Activated T-helper 1 cell treated with anti-CD3 and anti-CD28 coated beads, Interleukin-12 subunit alpha, Interleukin-12 subunit beta, Interleukin-2, Interleukin-4 antibody, amounts not matched to agents 30 ng/mL and 10 ng/mL and 1 ng/mL, durations not matched to agents 14 hours and 24 hours and 36 hours (primary cell): ENCODE measurements at regions of chr16 and their contacts with region 1.

Region 1: DNA sequence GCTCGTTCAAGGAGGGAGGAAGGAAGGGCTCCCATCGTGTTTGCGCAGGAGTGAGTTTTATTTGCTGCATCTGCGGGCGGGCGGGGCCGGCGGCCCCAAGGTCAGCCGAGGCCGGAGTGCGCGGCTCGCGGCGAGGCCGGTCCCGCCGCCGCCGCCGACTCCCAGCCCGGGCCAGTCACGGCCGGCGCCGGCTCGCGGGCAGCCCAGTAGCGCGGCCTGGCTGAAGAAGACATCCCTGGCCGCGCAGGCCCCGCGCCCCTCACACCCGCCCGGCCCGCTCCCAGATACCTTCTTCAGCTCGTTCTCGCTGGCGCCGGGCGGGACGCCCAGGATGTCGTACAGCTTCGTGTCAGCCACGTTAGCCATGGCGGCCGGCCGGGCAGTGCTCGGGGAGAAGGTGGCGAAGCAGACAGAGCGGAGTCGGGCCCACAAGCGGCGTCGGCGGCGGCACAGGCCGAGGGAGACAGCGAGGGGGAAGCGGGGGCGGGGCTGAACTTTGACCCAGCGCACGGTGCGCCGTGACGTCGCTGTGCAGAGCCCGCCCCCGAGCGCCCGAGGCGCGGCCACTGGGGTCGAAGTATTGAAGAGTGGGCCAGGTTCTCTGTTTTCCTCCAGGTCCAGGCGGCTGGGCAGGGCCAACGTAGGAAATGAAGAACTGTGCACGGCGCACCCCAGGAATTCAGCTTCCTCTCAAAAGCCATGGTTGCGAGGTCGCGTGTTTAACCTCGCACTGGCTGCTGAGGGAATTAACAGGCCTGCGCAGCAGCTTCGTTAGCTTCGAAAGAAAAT is at the start of gene DNAJA2:
- DNase-seq: peak; percentile 86
- H3K4me3 Mint-ChIP-seq: peak within 1 kb of the TSS; percentile 97
- H3K27ac Mint-ChIP-seq: peak within 1 kb of the TSS; percentile 96
- H3K4me1 Mint-ChIP-seq: peaks cover 47% of the 10 kb centered on the region
- H3K27me3 Mint-ChIP-seq: no peaks in the 10 kb centered on the region
- total RNA-seq, gene DNAJA2: 83.6 and 86.3 TPM in 2 replicates

Region 2: GRCh38 chr16:46689365-46690280 is 283.8 kb before region 1 on chr16 and contains the start of gene ORC6:
- intact Hi-C with region 1: loop called (anchors 1 kb)
- DNase-seq: peak; percentile 95
- H3K4me3 Mint-ChIP-seq: no peak within 1 kb of the TSS
- H3K27ac Mint-ChIP-seq: no peak within 1 kb of the TSS
- H3K4me1 Mint-ChIP-seq: peaks cover 29% of the 10 kb centered on the region
- H3K27me3 Mint-ChIP-seq: no peaks in the 10 kb centered on the region
- total RNA-seq, gene ORC6: 68.2 and 69.1 TPM in 2 replicates

Region 3: GRCh38 chr16:46947900-46948547 is 25.4 kb before region 1 on chr16:
- intact Hi-C with region 1: loop called (anchors 2 kb)
- DNase-seq: peak; percentile 19
- H3K4me3 Mint-ChIP-seq: no peak overlapping the region
- H3K27ac Mint-ChIP-seq: no peak overlapping the region
- H3K4me1 Mint-ChIP-seq: peaks cover 9% of the 10 kb centered on the region
- H3K27me3 Mint-ChIP-seq: peaks cover 2% of the 10 kb centered on the region

Region 4: GRCh38 chr16:47110939-47111338 is 137.5 kb after region 1 on chr16:
- intact Hi-C with region 1: loop called (anchors 1 kb)
- DNase-seq: no peak
- H3K4me3 Mint-ChIP-seq: no peak overlapping the region
- H3K27ac Mint-ChIP-seq: no peak overlapping the region
- H3K4me1 Mint-ChIP-seq: peaks cover 20% of the 10 kb centered on the region
- H3K27me3 Mint-ChIP-seq: no peaks in the 10 kb centered on the region

Region 5: GRCh38 chr16:47731252-47731651 is 757.9 kb after region 1 on chr16:
- intact Hi-C with region 1: no loop called
- DNase-seq: no peak
- H3K4me3 Mint-ChIP-seq: no peak overlapping the region
- H3K27ac Mint-ChIP-seq: no peak overlapping the region
- H3K4me1 Mint-ChIP-seq: peaks cover 21% of the 10 kb centered on the region
- H3K27me3 Mint-ChIP-seq: no peaks in the 10 kb centered on the region

Region 6: DNA sequence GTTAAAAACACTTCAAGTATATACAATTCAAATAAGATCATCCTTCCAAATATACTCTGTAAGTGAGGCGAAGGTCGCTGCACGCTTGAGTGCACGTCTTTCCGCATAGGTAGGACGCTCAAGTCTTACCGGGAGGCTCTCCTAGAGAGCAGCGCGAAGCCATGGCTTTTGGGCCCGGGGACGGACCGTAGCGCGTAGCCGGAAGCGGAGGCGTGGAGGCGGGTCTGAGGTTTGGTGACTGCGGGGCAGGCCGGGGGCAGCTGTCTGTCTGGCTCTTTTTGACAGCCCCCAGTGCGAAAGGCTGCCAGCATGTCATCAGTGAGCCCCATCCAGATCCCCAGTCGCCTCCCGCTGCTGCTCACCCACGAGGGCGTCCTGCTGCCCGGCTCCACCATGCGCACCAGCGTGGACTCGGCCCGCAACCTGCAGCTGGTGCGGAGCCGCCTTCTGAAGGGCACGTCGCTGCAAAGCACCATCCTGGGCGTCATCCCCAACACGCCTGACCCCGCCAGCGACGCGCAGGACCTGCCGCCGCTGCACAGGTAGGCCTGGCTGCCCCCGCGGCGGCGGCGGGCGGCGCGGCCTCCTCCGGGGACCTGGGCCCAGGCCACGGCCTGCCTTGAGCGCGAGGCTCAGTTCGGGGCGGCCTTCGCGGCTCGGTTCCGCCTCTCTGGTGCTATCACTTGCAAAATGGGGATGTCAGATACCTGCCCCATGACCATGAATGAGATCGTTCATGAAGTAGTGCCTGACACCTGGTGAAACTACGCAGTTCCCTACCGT is 1270.9 kb after region 1 on chr16 and contains the start of gene LONP2:
- intact Hi-C with region 1: loop called (anchors 5 kb)
- DNase-seq: peak; percentile 90
- H3K4me3 Mint-ChIP-seq: peak within 1 kb of the TSS; percentile 92
- H3K27ac Mint-ChIP-seq: peak within 1 kb of the TSS; percentile 93
- H3K4me1 Mint-ChIP-seq: peaks cover 27% of the 10 kb centered on the region
- H3K27me3 Mint-ChIP-seq: peaks cover 2% of the 10 kb centered on the region
- total RNA-seq, gene LONP2: 52.2 and 55.7 TPM in 2 replicates